Pancreas (tissue), 10 donors: ENCODE measurements at regions of chr10 and their contacts with region 1.

Region 1: DNA sequence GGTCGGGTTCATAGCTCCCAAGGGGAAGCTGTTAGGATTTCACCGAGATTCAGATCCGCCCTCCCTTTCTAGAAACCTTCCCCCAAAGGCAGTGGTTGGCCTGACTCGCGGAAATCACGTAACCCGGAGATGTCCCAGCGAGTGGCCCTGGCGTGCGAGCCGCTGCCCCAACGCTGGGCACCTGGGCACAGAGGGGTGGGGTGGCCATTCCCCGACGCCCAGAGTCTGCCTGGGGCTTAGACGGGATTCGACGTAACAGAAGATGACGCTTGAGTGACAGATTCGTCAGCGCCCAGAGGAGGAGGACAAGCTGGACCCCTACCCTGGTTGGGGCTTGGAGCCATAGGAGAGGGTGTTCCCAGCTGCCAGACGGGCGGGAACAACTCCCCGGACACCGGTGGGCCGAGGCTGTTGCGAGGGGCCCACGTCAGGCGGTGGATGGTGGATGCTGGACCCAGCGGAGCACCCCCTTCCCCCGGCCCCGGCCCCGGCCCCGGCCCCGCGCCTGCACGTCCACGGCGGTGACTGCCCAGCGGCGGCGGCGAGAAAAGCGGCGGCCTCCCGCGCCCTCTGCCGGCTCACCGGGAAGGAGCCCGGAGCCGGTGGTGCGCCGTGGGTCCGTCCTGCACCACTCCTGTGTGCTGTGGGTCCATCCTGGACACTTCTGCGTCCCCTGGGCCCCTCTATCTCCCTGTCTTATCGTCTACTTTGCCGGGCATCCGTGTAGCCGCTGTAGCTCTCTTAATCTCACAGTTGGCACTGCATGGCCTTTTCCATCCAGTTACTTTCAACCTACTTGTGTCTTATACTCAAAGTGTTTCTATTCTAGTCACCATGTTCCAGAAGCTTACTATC is 35.4 kb upstream of the KNDC1 start:
- DNase-seq: peak in 5 of 6 donors; percentile 18 to 87 (median 40)
- ATAC-seq: peak; percentile 71 to 92 (median 90)
- H3K4me3 ChIP-seq: no peak overlapping the region
- H3K27ac ChIP-seq: no peak overlapping the region
- H3K4me1 ChIP-seq: no peaks in the 10 kb centered on the region
- H3K27me3 ChIP-seq: no peaks in the 10 kb centered on the region
- CTCF ChIP-seq: peak in 3 of 4 donors; percentile 56 to 72 (median 56)

Region 2: DNA sequence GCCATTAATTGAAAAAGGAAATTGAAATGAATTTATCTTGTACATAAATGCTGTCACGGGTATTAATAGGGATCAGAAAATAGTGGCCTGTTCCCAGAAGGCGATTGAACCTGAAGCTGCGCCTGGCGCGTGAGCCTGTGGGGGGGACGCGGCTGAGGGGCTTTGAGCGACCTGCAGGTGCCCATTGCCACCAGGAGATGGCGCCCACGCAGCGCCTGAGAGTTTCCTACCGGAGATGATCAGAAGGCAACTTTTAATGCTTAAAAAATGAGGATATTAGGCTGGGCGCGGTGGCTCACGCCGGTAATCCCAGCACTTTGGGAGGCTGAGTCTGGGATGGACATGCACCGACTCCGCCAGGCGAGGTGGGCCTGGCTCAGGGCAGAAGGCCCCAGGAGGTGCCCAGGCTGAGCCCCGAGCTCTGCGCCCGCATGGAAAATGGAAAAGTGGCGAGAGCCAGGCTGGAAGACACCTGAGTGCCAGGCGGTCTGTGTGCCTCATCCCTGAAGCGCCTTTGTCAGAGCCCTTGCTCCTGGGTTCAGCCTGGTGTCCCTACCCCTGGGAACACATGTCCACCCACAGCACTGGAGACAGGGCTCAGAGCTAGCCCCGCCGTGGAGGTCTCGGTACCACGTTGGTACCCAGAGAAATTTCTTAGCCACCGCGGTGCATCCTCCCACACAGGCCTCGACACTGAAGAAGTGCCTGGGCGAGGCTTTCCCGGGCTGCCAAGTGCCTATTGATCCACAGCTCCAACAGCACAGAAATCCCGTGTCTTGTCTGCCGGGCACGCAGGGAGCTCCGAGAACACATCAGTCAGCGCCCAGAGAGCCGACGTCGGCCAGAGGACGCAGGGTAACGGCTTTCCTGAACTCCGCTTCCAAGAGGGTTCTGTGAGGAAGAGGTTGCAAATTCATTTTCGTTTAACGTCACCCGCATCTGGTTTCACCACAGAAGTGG is 469.6 kb before region 1 on chr10:
- intact Hi-C with region 1: loop called in 2 of 3 experiments (anchors 10 kb)
- DNase-seq: peak in 5 of 6 donors; percentile 40 to 85 (median 66)
- ATAC-seq: peak; percentile 55 to 82 (median 76)
- H3K4me3 ChIP-seq: no peak overlapping the region
- H3K27ac ChIP-seq: no peak overlapping the region
- H3K4me1 ChIP-seq: peaks cover 0 to 6% (median 0%) of the 10 kb centered on the region in 3 donors
- H3K27me3 ChIP-seq: no peaks in the 10 kb centered on the region
- CTCF ChIP-seq: peak; percentile 84 to 92 (median 87)

Region 3: GRCh38 chr10:132836832-132837540 is 287.6 kb before region 1 on chr10:
- intact Hi-C with region 1: loop called in 2 of 3 experiments (anchors 10 kb)
- DNase-seq: peak in 3 of 6 donors; percentile 41 to 80 (median 65)
- ATAC-seq: peak; percentile 60 to 80 (median 80)
- H3K4me3 ChIP-seq: no peak overlapping the region
- H3K27ac ChIP-seq: no peak overlapping the region
- H3K4me1 ChIP-seq: no peaks in the 10 kb centered on the region
- H3K27me3 ChIP-seq: peaks cover 0 to 7% (median 0%) of the 10 kb centered on the region in 4 donors
- CTCF ChIP-seq: peak; percentile 95 to 98 (median 96)

Region 4: DNA sequence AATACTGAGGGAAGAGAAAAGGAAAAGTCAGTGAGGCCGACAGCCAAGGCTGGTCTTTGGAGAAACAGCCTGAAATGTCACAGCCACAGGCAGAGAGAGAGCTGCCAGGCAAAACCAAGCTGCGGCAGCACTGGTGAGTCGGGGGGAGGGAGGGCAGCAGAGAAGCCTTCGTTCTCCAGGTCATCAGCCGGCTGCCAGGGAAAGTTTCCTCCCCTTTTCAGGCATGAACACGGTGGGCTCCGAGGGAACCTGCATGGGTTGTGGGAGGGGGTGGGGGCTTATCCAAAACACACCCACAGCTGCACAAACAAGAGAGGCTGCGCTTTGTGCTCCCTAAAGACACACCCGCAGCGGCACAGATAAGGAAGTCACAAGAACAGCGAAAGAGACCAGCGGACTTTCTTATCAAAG is 276.3 kb before region 1 on chr10:
- intact Hi-C with region 1: loop called in 1 of 3 experiments (anchors 10 kb)
- DNase-seq: peak in 1 of 6 donors; percentile 24
- ATAC-seq: peak in 2 of 4 donors; percentile 36 to 42
- H3K4me3 ChIP-seq: no peak overlapping the region
- H3K27ac ChIP-seq: no peak overlapping the region
- H3K4me1 ChIP-seq: no peaks in the 10 kb centered on the region
- H3K27me3 ChIP-seq: peaks cover 0 to 1% (median 0%) of the 10 kb centered on the region in 4 donors
- CTCF ChIP-seq: no peak

Region 5: GRCh38 chr10:132904181-132904819 is 220.3 kb before region 1 on chr10:
- intact Hi-C with region 1: loop called in 1 of 3 experiments (anchors 10 kb)
- DNase-seq: peak in 4 of 6 donors; percentile 31 to 64 (median 40)
- ATAC-seq: peak in 3 of 4 donors; percentile 43 to 71 (median 63)
- H3K4me3 ChIP-seq: no peak overlapping the region
- H3K27ac ChIP-seq: no peak overlapping the region
- H3K4me1 ChIP-seq: no peaks in the 10 kb centered on the region
- H3K27me3 ChIP-seq: no peaks in the 10 kb centered on the region
- CTCF ChIP-seq: peak; percentile 31 to 50 (median 45)

Region 6: GRCh38 chr10:132939957-132940790 is 184.4 kb before region 1 on chr10:
- intact Hi-C with region 1: loop called in 1 of 3 experiments (anchors 10 kb)
- DNase-seq: peak in 3 of 6 donors; percentile 42 to 75 (median 58)
- ATAC-seq: peak in 3 of 4 donors; percentile 52 to 79 (median 73)
- H3K4me3 ChIP-seq: no peak overlapping the region
- H3K27ac ChIP-seq: no peak overlapping the region
- H3K4me1 ChIP-seq: peaks cover 0 to 6% (median 0%) of the 10 kb centered on the region in 3 donors
- H3K27me3 ChIP-seq: no peaks in the 10 kb centered on the region
- CTCF ChIP-seq: peak in 3 of 4 donors; percentile 55 to 78 (median 59)

Region 7: GRCh38 chr10:133373104-133373624 is 248.6 kb after region 1 on chr10 and contains the start of gene ECHS1:
- intact Hi-C with region 1: no loop called
- DNase-seq: peak; percentile 94 to 99 (median 97)
- ATAC-seq: peak; percentile 97 to 99 (median 98)
- H3K4me3 ChIP-seq: peak within 1 kb of the TSS; percentile 36 to 72 (median 58)
- H3K27ac ChIP-seq: peak within 1 kb of the TSS; percentile 61 to 87 (median 72)
- H3K4me1 ChIP-seq: peaks cover 0 to 10% (median 0%) of the 10 kb centered on the region in 3 donors
- H3K27me3 ChIP-seq: no peaks in the 10 kb centered on the region
- CTCF ChIP-seq: no peak
- total RNA-seq, gene ECHS1: 32.4 to 47.2 (median 36.1) TPM